ENCODE measurements at regions of chr4 and their contacts with region 1.

Region 1: GRCh38 chr4:184838249-184839074 is 12.7 kb upstream of the ACSL1 start:
- DNase-seq: peak; percentile 89 to 90
- H3K4me3 ChIP-seq: no peak overlapping the region
- H3K4me3 Mint-ChIP-seq: peak overlapping the region; percentile 52
- H3K27ac Mint-ChIP-seq: peak overlapping the region; percentile 93
- H3K4me1 ChIP-seq: peaks cover 40% of the 10 kb centered on the region
- H3K4me1 Mint-ChIP-seq: peaks cover 27% of the 10 kb centered on the region
- H3K27me3 ChIP-seq: no peaks in the 10 kb centered on the region
- H3K27me3 Mint-ChIP-seq: no peaks in the 10 kb centered on the region
- CTCF ChIP-seq: no peak

Region 2: DNA sequence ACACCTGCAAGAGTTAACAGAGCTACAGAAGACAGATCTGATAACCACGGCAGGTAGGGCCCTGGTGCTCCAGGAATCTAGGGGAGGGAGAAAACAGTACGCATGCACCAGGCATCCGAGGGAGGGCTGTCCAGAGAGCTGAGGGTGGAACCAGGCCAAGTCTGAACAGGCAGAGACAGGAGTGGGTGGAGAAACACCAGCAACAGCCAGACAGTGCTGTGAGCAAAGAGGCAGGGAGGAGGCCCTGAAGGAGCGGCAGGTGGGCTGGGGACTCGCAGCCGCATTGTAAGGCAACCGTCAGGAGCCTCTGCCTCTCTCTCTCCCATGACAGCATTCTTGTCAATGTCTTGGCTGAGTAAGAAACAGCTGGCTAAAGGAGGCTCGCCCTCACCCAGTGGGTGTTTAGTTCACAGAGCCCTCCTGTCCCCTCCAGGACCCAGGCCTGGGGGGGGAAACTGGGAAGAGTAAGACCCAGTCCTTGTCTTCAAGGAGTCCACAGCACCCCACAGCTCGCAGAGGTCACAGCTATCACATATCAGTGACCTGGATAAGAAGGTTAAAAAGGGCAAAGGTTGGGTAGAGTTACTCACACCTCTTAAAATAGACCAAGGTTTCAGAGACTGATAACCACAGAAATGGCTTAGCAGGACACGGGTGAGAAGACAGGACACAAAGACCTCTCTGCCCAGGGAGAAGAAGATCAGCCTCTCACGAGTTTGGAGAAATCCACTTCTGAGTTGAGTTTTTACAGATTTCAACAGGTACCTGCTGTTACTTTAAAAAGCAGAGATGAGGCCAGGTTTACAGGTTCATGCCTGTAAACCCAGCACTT is 23.2 kb before region 1 on chr4:
- CTCF ChIA-PET with region 1: no interaction called
- POLR2A ChIA-PET with region 1: interaction called, 4 read pairs
- intact Hi-C with region 1: loop called (anchors 1 kb)
- DNase-seq: peak; percentile 92 to 95
- H3K4me3 ChIP-seq: peak overlapping the region; percentile 6
- H3K4me3 Mint-ChIP-seq: peak overlapping the region; percentile 71
- H3K27ac Mint-ChIP-seq: peak overlapping the region; percentile 95
- H3K4me1 ChIP-seq: peaks cover 60% of the 10 kb centered on the region
- H3K4me1 Mint-ChIP-seq: peaks cover 49% of the 10 kb centered on the region
- H3K27me3 ChIP-seq: no peaks in the 10 kb centered on the region
- H3K27me3 Mint-ChIP-seq: no peaks in the 10 kb centered on the region
- CTCF ChIP-seq: no peak

Region 3: DNA sequence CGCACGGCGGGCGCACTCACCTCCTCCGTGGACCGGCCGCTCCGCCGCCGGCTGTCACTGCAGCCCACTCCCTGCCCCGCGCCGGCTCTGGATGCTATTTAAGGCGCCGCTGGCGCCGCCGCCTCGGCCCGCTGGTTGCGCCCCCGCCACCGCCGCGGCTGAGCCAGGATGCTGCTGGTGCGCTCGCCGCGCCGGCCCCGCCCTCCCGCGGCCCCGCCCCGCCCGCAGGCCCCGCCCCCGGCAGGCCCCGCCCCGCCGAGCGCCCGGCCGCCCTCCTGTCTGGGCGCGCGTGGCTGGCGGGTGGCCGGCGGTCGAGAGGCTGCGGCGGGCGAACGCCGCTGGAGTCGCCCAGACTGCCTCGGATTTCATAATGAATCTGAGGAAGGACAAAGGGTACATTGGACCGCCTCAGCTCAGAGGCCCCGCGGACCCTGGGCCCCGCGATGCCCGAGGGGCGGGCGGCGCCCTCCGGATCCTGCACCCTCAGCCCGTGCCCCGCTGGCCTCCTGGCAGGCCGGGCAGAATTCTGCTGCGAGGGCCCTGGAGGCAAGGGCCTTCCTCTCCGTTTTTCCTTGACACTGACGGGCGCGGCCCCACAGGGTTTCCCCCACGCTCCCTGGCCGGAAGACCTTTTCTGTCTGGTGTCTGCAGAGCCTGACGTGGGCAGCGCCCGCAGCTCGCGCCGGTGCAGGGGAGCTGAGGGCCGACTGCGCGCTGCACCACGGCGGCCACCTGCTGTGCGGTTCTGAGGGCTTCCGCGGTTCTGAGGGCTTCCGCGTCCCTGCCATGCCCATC is 12.4 kb before region 1 on chr4 and contains the start of gene ACSL1:
- CTCF ChIA-PET with region 1: no interaction called
- POLR2A ChIA-PET with region 1: no interaction called
- intact Hi-C with region 1: loop called (anchors 1 kb)
- DNase-seq: peak; percentile 62 to 81
- H3K4me3 ChIP-seq: peak within 1 kb of the TSS; percentile 75
- H3K4me3 Mint-ChIP-seq: peak within 1 kb of the TSS; percentile 92
- H3K27ac Mint-ChIP-seq: peak within 1 kb of the TSS; percentile 73
- H3K4me1 ChIP-seq: peaks cover 2% of the 10 kb centered on the region
- H3K4me1 Mint-ChIP-seq: peaks cover 7% of the 10 kb centered on the region
- H3K27me3 ChIP-seq: no peaks in the 10 kb centered on the region
- H3K27me3 Mint-ChIP-seq: no peaks in the 10 kb centered on the region
- CTCF ChIP-seq: no peak
- total RNA-seq, gene ACSL1: 76.3 and 100 TPM in 2 replicates

Region 4: GRCh38 chr4:184937745-184938144 is 99.3 kb after region 1 on chr4:
- CTCF ChIA-PET with region 1: no interaction called
- POLR2A ChIA-PET with region 1: no interaction called
- intact Hi-C with region 1: loop called (anchors 1 kb)
- DNase-seq: peak in 1 of 2 experiments; percentile 23
- H3K4me3 ChIP-seq: no peak overlapping the region
- H3K4me3 Mint-ChIP-seq: no peak overlapping the region
- H3K27ac Mint-ChIP-seq: peak overlapping the region; percentile 85
- H3K4me1 ChIP-seq: peaks cover 39% of the 10 kb centered on the region
- H3K4me1 Mint-ChIP-seq: peaks cover 36% of the 10 kb centered on the region
- H3K27me3 ChIP-seq: no peaks in the 10 kb centered on the region
- H3K27me3 Mint-ChIP-seq: no peaks in the 10 kb centered on the region
- CTCF ChIP-seq: no peak

Measured in Caco-2 (cell line).